CD14-positive monocyte (primary cell): ENCODE measurements at regions of chr3 and their contacts with region 1.

Region 1: GRCh38 chr3:129249276-129250065 is at the start of gene COPG1:
- DNase-seq: peak; percentile 84 to 96 (median 90)
- H3K4me3 ChIP-seq: peak within 1 kb of the TSS; percentile 70 to 94 (median 94)
- H3K4me3 Mint-ChIP-seq: peak within 1 kb of the TSS; percentile 92 to 95
- H3K27ac ChIP-seq: peak within 1 kb of the TSS; percentile 74 to 97
- H3K27ac Mint-ChIP-seq: peak within 1 kb of the TSS; percentile 93 to 99 (median 97)
- H3K4me1 ChIP-seq: peaks cover 27 to 36% of the 10 kb centered on the region in 2 donors
- H3K4me1 Mint-ChIP-seq: peaks cover 31% of the 10 kb centered on the region
- H3K27me3 ChIP-seq: no peaks in the 10 kb centered on the region
- H3K27me3 Mint-ChIP-seq: peaks cover 0 to 5% (median 3%) of the 10 kb centered on the region in 3 donors
- CTCF ChIP-seq: no peak
- polyA plus RNA-seq, gene COPG1: 59.9 to 94.5 (median 60.2) TPM

Region 2: DNA sequence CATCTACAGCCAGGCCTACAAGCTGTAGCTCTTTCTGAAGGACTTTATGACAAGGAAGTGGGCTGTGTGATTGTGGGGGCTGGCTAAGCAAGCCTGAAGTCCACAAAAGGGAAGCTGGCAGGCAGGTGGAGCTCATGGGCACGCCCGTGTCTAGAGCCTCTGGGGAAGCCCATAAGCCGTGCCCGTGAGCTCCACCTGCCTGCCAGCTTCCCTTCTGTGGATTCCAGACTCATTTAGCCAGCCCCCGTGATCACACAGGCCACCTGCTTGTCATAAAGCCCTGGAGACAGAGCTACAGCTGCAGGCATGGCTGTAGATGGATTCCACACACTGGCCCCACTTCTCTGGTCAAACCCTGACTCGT is 233.1 kb before region 1 on chr3:
- intact Hi-C with region 1: no loop called
- DNase-seq: peak in 2 of 3 donors; percentile 35 to 41
- H3K4me3 ChIP-seq: no peak overlapping the region
- H3K4me3 Mint-ChIP-seq: no peak overlapping the region
- H3K27ac ChIP-seq: no peak overlapping the region
- H3K27ac Mint-ChIP-seq: peak overlapping the region in 1 of 7 donors; percentile 15
- H3K4me1 ChIP-seq: peaks cover 16 to 19% of the 10 kb centered on the region in 2 donors
- H3K4me1 Mint-ChIP-seq: peaks cover 20% of the 10 kb centered on the region
- H3K27me3 ChIP-seq: no peaks in the 10 kb centered on the region
- H3K27me3 Mint-ChIP-seq: peaks cover 5 to 7% (median 6%) of the 10 kb centered on the region in 3 donors
- CTCF ChIP-seq: peak; percentile 20

Region 3: GRCh38 chr3:129161860-129162531 is 87.5 kb before region 1 on chr3:
- intact Hi-C with region 1: loop called in 1 of 2 experiments (anchors 2 kb)
- DNase-seq: peak in 2 of 3 donors; percentile 12 to 42
- H3K4me3 ChIP-seq: peak overlapping the region; percentile 78 to 88 (median 86)
- H3K4me3 Mint-ChIP-seq: peak overlapping the region; percentile 85 to 98
- H3K27ac ChIP-seq: peak overlapping the region; percentile 96 to 98
- H3K27ac Mint-ChIP-seq: peak overlapping the region; percentile 98 to 100 (median 100)
- H3K4me1 ChIP-seq: peaks cover 30 to 33% of the 10 kb centered on the region in 2 donors
- H3K4me1 Mint-ChIP-seq: peaks cover 30% of the 10 kb centered on the region
- H3K27me3 ChIP-seq: no peaks in the 10 kb centered on the region
- H3K27me3 Mint-ChIP-seq: peaks cover 0 to 2% (median 0%) of the 10 kb centered on the region in 3 donors
- CTCF ChIP-seq: peak; percentile 57

Region 4: DNA sequence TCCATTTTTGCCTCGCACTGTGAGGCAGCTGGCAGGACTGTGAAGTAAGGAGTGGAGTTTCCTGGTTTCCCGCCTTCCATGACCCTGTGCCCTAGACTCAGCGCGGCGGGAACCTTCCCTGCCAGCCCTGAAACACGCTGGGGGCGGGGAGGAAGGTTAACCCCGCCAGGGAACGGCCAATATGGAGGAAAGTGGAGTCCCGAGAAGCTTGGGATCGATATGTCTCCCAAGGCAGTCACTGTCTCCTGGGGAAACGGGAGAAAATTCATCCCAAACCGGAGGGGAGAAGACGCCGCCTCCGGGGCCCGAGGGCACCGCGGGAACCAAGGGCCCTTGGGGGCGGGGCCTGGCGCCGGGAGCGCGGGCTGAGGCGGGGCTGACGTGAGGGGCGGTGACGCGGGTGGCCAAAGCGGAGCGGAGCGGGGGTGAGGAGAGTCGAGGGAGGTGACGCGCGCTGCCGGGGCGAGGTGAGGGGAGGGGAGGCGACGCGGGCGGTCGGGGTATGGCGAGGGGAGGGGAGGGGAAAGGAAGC is 29.0 kb after region 1 on chr3 and contains the start of gene HMCES:
- intact Hi-C with region 1: no loop called
- DNase-seq: peak; percentile 82 to 88 (median 86)
- H3K4me3 ChIP-seq: peak within 1 kb of the TSS; percentile 70 to 87 (median 75)
- H3K4me3 Mint-ChIP-seq: peak within 1 kb of the TSS; percentile 98 to 99
- H3K27ac ChIP-seq: peak within 1 kb of the TSS; percentile 42 to 77
- H3K27ac Mint-ChIP-seq: peak within 1 kb of the TSS; percentile 86 to 93 (median 90)
- H3K4me1 ChIP-seq: peaks cover 26 to 39% of the 10 kb centered on the region in 2 donors
- H3K4me1 Mint-ChIP-seq: peaks cover 35% of the 10 kb centered on the region
- H3K27me3 ChIP-seq: peaks cover 0 to 6% of the 10 kb centered on the region in 2 donors
- H3K27me3 Mint-ChIP-seq: peaks cover 4 to 8% (median 5%) of the 10 kb centered on the region in 3 donors
- CTCF ChIP-seq: no peak
- polyA plus RNA-seq, gene HMCES: 11.9 to 23.0 (median 18.0) TPM